Aorta (tissue), 5 donors: ENCODE measurements at regions of chr15 and their contacts with region 1.

Region 1: GRCh38 chr15:45714590-45715488 is 80.0 kb downstream of the SQOR start:
- DNase-seq: no peak
- ATAC-seq: peak; percentile 85
- H3K4me3 ChIP-seq: no peak overlapping the region
- H3K27ac ChIP-seq: no peak overlapping the region
- H3K4me1 ChIP-seq: peaks cover 0 to 1% of the 10 kb centered on the region in 2 donors
- H3K27me3 ChIP-seq: no peaks in the 10 kb centered on the region

Region 2: DNA sequence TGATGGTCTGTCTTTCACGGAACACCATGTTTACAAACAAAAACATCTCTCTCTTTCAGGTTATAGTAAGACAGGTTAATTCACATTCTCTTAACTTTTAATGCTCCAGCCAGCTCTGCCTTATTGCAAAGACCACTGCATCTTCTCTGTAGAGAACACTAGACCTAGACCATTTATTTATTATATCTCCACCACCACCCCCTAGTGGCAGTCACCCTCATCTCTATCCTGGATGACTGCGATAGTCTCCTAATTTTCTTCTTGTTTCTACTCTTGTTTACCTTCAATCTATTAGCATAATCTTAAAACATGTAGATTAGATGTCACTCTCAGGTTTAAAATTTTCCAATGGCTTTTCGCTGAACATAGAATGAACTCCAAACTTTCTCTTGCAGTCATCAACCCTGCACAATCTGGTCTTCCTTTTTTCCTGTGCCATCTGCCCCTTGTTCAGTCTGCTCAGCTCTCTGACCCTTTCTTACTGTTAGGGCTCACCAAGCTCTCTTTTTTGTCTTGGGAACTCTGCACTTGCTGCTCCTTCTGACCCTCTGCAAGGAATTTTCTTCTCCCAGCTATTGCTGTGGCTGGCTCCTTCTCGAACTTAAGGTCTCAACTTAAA is 75.6 kb after region 1 on chr15:
- intact Hi-C with region 1: loop called (anchors 2 to 5 kb)
- DNase-seq: no peak
- ATAC-seq: no peak
- H3K4me3 ChIP-seq: no peak overlapping the region
- H3K27ac ChIP-seq: no peak overlapping the region
- H3K4me1 ChIP-seq: no peaks in the 10 kb centered on the region
- H3K27me3 ChIP-seq: peaks cover 0 to 2% of the 10 kb centered on the region in 2 donors

Region 3: GRCh38 chr15:45795440-45796069 is 80.7 kb after region 1 on chr15:
- intact Hi-C with region 1: loop called (anchors 2 to 5 kb)
- DNase-seq: no peak
- ATAC-seq: peak; percentile 28
- H3K4me3 ChIP-seq: no peak overlapping the region
- H3K27ac ChIP-seq: no peak overlapping the region
- H3K4me1 ChIP-seq: no peaks in the 10 kb centered on the region
- H3K27me3 ChIP-seq: peaks cover 0 to 2% of the 10 kb centered on the region in 2 donors

Region 4: DNA sequence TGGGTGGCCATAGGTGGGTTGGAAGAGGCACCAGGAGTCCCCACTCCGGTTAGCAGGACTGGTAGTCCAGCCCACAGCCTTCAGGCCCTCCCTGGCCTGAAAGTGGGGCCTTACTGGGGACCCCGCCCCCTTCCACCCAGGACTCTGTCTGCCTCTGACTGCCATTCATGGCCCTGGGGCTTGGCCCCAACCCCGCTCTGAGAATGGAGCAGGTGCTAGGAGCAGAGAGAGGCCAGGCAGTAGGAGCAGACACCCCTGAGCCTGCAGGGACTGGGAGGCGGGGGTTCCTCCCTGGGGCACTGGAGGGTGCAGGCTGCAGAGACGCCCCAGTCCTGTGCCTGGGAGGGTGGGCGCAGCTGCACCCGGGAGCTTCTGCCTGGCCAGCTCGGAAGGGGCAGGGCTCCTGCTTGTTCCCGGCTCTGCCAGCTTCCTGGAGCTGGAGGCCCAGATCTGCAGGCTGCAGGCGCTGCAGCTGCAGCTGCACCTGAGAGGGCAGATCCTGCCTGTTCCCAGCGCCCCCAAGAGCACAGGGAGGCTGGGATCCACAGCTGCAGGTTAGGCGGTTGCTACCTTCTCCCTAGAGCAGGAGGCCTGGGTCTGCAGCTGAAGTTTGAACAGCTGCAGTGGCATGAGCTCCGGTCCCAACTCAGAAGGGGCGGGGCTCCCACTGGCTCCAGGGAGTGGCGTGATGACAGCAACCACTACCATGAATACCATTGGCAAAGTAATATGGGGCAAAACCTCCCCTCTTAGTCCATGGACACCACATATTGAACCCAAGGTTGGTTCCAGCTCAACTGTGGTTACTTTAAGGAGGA is 114.7 kb after region 1 on chr15:
- intact Hi-C with region 1: no loop called
- DNase-seq: no peak
- ATAC-seq: peak; percentile 48
- H3K4me3 ChIP-seq: no peak overlapping the region
- H3K27ac ChIP-seq: no peak overlapping the region
- H3K4me1 ChIP-seq: no peaks in the 10 kb centered on the region
- H3K27me3 ChIP-seq: no peaks in the 10 kb centered on the region

Region 5: DNA sequence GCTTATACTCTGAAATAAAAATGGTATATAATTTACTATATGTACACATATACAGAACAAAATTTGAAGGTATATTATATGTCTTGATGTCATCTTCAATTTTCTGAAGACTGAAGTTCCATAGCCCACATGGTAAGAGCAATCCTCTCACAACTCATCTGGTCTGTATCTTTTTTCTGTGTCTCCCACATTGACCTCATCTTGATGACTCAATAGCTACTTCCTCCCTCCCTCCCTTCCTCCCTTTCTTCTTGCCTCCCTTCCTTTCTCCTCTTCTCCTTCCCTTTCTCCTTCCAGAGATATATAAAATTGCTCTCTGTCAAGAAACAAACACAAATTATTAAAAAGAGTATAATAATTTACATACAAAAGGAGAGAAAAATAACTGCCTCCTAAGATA is 188.4 kb after region 1 on chr15:
- intact Hi-C with region 1: loop called in 1 of 2 experiments (anchors 10 kb)
- DNase-seq: no peak
- ATAC-seq: no peak
- H3K4me3 ChIP-seq: no peak overlapping the region
- H3K27ac ChIP-seq: no peak overlapping the region
- H3K4me1 ChIP-seq: no peaks in the 10 kb centered on the region
- H3K27me3 ChIP-seq: no peaks in the 10 kb centered on the region